Activated T-helper 1 cell treated with anti-CD3 and anti-CD28 coated beads, Interleukin-12 subunit alpha, Interleukin-12 subunit beta, Interleukin-2, Interleukin-4 antibody, amounts not matched to agents 30 ng/mL and 10 ng/mL and 1 ng/mL, durations not matched to agents 14 hours and 24 hours and 36 hours (primary cell): ENCODE measurements at regions of chr6 and their contacts with region 1.

Region 1: DNA sequence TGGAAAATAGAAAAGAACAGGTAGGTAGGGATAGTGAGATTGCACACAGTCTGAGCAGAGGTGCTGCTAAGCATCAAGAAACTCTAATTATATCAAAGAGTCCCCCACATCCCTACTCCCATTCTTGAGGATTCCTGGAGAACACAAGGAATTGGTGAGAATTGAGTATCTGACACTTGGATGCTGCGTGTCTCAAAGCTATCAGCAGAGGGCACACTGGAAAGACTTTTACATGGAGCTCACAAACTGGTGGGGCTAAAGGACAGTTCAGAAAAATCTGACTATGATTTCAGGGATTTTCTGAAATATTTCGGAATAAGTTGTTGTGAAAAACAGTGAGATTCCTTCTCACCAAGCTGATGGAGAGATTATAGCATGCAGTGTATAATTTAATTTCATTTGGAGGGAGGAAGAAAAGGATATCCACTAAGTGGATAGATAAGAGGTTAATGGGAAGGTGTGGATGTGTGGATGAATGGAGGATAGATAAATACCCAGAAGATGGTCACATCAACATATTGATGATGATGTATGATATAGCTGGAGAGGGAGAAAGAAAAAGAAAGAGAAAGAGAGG is 215.4 kb upstream of the DEFB112 start:
- DNase-seq: no peak
- H3K4me3 Mint-ChIP-seq: no peak overlapping the region
- H3K27ac Mint-ChIP-seq: no peak overlapping the region
- H3K4me1 Mint-ChIP-seq: no peaks in the 10 kb centered on the region
- H3K27me3 Mint-ChIP-seq: no peaks in the 10 kb centered on the region

Region 2: DNA sequence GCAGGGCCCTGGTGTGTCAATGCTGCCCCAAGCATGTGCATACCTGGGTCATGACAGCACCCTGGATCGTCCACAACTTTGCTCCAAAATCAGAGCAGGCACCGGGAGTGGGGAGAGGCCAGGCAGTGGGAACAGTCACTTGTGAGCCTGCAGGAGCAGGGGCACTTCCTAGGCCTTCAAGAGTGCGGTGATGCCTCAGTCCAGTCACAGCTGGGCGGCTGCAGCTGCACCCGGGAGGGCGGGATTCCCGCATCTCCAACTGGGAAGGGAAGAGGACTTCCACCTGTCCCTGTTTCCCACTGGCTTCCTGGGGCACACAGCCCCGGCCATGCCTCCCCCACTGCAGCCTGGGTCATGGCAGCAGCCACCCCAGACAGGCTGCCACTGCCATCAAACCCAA is 24.1 kb before region 1 on chr6:
- intact Hi-C with region 1: loop called (anchors 1 kb)
- DNase-seq: no peak
- H3K4me3 Mint-ChIP-seq: no peak overlapping the region
- H3K27ac Mint-ChIP-seq: no peak overlapping the region
- H3K4me1 Mint-ChIP-seq: no peaks in the 10 kb centered on the region
- H3K27me3 Mint-ChIP-seq: no peaks in the 10 kb centered on the region